Heart left ventricle (tissue), 16 donors: ENCODE measurements at regions of chr16 and their contacts with region 1.

Region 1: GRCh38 chr16:1871974-1872635 is at the start of gene MEIOB:
- DNase-seq: no peak
- ATAC-seq: peak in 2 of 4 donors; percentile 44 to 60
- H3K4me3 ChIP-seq: peak within 1 kb of the TSS in 3 of 12 donors; percentile 5 to 33 (median 32)
- H3K27ac ChIP-seq: no peak within 1 kb of the TSS
- H3K4me1 ChIP-seq: peaks cover 0 to 9% (median 0%) of the 10 kb centered on the region in 12 donors
- H3K27me3 ChIP-seq: peaks cover 8 to 58% (median 21%) of the 10 kb centered on the region in 9 donors
- CTCF ChIP-seq: no peak
- POLR2A ChIP-seq: no peak
- total RNA-seq, gene MEIOB: not detected

Region 2: DNA sequence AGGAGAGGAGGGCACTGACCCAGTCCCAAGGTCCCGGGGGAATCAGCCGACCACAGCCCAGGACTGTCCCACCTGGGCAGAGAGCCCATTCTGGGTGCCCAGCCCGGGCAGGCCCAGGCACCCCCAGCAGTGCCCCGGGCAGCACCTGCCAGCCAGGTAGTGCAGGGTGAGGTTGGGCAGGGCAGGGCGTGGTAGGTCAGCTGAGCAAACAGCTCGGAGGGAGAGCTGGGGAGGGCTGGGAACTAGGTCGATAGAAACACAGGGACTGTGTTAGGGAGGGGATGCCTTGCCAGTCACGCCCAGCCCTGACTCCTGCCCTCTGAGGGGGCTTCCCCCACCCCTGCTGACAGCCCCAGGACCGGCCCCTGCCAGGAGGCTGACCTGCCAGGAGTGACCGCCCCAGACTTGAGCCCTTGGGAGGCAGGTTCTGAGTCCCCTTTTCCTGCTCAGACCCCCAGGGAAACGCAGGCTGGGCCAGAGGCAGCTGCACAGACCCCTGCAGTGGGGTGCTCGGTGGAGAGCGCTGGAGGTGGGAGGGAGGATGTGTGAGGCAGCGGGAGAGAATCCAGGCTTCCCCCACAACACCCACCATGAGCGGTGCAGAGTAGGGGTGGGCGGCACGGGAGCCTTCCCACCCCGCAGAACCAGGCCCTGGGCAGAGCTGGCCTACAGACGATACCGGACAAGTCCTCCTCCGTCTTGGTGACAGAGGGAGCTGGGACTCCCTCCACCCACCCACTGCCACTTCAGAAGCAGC is 41.4 kb after region 1 on chr16:
- intact Hi-C with region 1: loop called in 2 of 10 experiments (anchors 5 kb)
- DNase-seq: no peak
- ATAC-seq: peak in 2 of 4 donors; percentile 14 to 21
- H3K4me3 ChIP-seq: no peak overlapping the region
- H3K27ac ChIP-seq: no peak overlapping the region
- H3K4me1 ChIP-seq: peaks cover 0 to 10% (median 0%) of the 10 kb centered on the region in 12 donors
- H3K27me3 ChIP-seq: peaks cover 14 to 68% (median 42%) of the 10 kb centered on the region in 9 donors
- CTCF ChIP-seq: no peak
- POLR2A ChIP-seq: no peak